Activated T-helper 1 cell treated with anti-CD3 and anti-CD28 coated beads, Interleukin-12 subunit alpha, Interleukin-12 subunit beta, Interleukin-2, Interleukin-4 antibody, amounts not matched to agents 30 ng/mL and 10 ng/mL and 1 ng/mL, durations not matched to agents 14 hours and 24 hours and 36 hours (primary cell): ENCODE measurements at regions of chr22 and their contacts with region 1.

Region 1: GRCh38 chr22:29394931-29395581 is 6.7 kb upstream of the AP1B1 start:
- DNase-seq: peak; percentile 48
- H3K4me3 Mint-ChIP-seq: no peak overlapping the region
- H3K27ac Mint-ChIP-seq: no peak overlapping the region
- H3K4me1 Mint-ChIP-seq: peaks cover 8% of the 10 kb centered on the region
- H3K27me3 Mint-ChIP-seq: peaks cover 11% of the 10 kb centered on the region

Region 2: DNA sequence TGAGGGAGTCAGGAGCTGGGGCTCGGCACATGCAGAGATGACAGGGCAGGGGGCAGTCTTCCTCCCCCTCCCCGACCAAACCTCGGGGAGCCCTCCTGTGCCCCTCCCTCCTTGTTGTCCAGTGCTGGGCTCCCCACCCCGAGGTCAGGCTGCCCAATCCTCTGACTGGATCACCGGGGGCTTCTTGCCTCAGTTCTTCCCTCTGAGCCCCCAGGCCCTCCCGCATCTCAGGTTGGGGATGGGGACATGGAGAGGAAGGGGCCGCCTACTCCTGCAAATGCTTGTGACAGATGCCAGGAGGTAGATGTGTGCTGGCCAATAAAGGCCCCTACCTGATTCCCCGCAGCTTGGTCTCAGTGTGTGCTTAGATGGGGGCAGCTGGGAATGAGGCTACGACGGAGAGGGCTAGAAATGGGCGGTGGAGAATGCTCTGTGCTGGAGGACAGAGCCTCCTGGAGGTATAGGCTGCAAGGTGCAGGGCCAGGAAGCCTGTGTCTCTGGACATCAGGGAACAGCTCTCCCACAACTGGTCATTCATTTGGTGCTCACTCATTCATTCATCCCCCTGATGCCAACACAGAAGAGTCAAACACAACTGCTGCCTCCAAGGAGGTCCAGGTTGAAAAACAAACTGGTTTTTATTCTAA is 135.7 kb before region 1 on chr22:
- intact Hi-C with region 1: no loop called
- DNase-seq: no peak
- H3K4me3 Mint-ChIP-seq: no peak overlapping the region
- H3K27ac Mint-ChIP-seq: no peak overlapping the region
- H3K4me1 Mint-ChIP-seq: no peaks in the 10 kb centered on the region
- H3K27me3 Mint-ChIP-seq: no peaks in the 10 kb centered on the region

Region 3: GRCh38 chr22:29408945-29409344 is 13.9 kb after region 1 on chr22:
- intact Hi-C with region 1: loop called (anchors 1 kb)
- DNase-seq: no peak
- H3K4me3 Mint-ChIP-seq: no peak overlapping the region
- H3K27ac Mint-ChIP-seq: no peak overlapping the region
- H3K4me1 Mint-ChIP-seq: peaks cover 14% of the 10 kb centered on the region
- H3K27me3 Mint-ChIP-seq: peaks cover 9% of the 10 kb centered on the region

Region 4: DNA sequence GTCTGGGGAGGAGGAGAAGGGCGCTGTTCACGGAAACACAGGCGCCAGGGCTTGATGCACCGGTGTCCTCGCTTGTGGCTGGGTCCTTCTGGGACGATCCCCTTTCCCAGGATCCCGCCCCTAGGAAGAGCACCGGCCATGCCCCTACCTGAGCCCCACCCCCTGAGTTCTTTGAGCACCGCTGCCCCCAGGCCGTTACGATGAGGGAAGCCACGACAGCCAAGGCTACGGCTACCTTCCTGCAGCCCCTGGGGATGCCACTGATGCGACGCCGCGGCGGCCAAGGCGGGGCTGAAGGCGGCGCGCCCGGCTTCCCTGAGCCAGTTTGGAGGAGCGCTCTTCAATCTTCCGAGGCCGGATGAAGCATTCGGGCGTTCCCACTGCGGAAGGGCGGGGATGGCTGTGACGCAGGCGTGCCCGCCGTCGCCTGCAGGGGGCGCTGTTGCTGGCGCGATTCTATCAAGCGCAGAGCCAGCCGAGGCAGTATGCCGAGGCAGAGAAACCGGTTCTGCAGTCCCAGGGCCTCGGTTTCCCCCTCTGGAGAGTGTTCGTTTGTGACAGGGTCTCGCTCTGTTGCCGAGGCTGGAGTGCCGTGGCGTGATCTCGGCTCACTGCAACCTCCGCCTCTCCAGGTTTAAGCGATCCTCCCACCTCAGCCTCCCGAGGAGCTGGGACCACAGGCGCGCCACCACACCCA is 75.3 kb after region 1 on chr22:
- intact Hi-C with region 1: loop called (anchors 1 kb)
- DNase-seq: peak; percentile 73
- H3K4me3 Mint-ChIP-seq: peak overlapping the region; percentile 47
- H3K27ac Mint-ChIP-seq: no peak overlapping the region
- H3K4me1 Mint-ChIP-seq: peaks cover 6% of the 10 kb centered on the region
- H3K27me3 Mint-ChIP-seq: peaks cover 16% of the 10 kb centered on the region

Region 5: DNA sequence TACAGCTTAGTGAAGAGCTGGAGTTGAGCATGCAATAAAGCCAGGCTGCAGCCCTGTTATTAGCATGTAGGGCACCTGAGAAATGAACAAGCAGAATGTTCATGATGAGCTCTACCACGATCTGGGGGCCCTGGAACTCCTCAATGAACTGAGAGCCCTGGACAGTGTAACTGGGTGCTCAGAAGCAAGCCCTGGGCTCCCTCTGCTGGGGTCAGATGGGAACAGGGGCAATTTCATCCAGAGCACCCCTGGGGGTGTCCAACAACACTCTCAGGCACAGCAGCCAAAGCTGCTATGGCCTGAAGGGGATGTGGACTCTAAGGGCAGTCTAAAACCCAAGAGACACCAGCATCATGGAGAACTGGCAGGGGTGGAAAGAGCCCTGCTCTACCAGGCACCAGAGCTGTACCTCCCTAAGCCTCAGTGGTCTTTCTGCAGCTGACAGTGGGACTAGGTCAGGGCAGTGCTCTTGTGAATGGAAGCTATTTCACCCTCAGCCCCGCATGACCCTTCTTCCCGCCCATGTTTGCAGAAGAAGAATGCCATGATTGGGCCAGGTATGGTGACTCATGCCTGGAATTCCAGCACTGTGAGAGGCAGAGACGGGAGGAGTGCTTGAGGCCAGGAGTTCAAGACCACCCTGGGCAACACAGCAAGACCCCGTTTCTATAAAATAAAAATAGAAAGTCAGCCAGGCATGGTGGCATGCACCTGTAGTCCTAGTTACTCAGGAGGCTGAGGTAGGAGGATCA is 129.6 kb after region 1 on chr22:
- intact Hi-C with region 1: loop called (anchors 1 kb)
- DNase-seq: peak; percentile 1
- H3K4me3 Mint-ChIP-seq: no peak overlapping the region
- H3K27ac Mint-ChIP-seq: no peak overlapping the region
- H3K4me1 Mint-ChIP-seq: no peaks in the 10 kb centered on the region
- H3K27me3 Mint-ChIP-seq: no peaks in the 10 kb centered on the region